ENCODE measurements at regions of chr4 and their contacts with region 1.

Region 1: DNA sequence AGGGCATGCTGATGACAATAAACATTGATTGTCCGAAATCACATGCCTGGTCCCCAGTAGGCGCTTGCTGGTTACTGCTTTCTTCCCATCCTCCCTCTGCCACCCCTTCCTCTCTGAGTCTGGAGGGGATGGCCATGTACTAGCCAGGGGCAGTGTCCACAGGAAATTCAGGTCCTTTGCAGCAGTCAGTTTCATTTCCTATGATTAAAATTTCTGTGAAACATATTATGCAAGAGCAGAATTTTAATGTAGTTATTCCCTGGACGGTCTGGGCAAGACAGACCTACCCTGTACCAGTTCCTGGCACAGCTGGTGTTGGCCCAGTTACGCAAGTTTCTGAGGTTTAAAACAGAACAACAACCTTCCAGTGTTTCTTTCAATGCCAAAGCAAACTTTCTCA is 28.2 kb upstream of the TLR2 start:
- DNase-seq: no peak
- ATAC-seq: no peak
- H3K4me3 ChIP-seq: no peak overlapping the region
- H3K4me3 Mint-ChIP-seq: no peak overlapping the region
- H3K27ac ChIP-seq: no peak overlapping the region
- H3K27ac Mint-ChIP-seq: no peak overlapping the region
- H3K4me1 ChIP-seq: peaks cover 17% of the 10 kb centered on the region
- H3K4me1 Mint-ChIP-seq: peaks cover 17% of the 10 kb centered on the region
- H3K27me3 ChIP-seq: no peaks in the 10 kb centered on the region
- H3K27me3 Mint-ChIP-seq: no peaks in the 10 kb centered on the region
- CTCF ChIP-seq: no peak

Region 2: DNA sequence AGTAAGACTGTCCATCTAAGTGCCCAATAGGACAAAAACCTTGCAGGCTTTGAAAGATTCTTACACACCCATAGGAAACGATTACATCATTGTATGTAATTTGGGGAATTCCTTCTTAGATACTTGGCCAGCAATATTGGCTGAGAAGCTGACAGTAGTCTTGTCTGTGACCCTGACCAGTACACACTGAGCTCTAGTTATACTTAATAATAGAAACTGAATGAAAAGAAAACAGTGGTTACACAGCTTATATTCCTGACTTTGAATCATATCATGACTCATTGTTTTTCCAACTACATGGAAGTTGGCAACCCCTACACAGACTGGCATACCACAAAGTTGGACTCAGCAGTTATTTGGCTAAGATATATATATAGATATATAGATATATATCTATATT is 21.1 kb after region 1 on chr4:
- CTCF ChIA-PET with region 1: no interaction called
- POLR2A ChIA-PET with region 1: no interaction called
- intact Hi-C with region 1: loop called in 1 of 2 experiments (anchors 1 kb)
- DNase-seq: no peak
- ATAC-seq: no peak
- H3K4me3 ChIP-seq: no peak overlapping the region
- H3K4me3 Mint-ChIP-seq: no peak overlapping the region
- H3K27ac ChIP-seq: no peak overlapping the region
- H3K27ac Mint-ChIP-seq: no peak overlapping the region
- H3K4me1 ChIP-seq: no peaks in the 10 kb centered on the region
- H3K4me1 Mint-ChIP-seq: no peaks in the 10 kb centered on the region
- H3K27me3 ChIP-seq: no peaks in the 10 kb centered on the region
- H3K27me3 Mint-ChIP-seq: peaks cover 14% of the 10 kb centered on the region
- CTCF ChIP-seq: no peak

Region 3: GRCh38 chr4:153940916-153941315 is 285.0 kb after region 1 on chr4:
- CTCF ChIA-PET with region 1: no interaction called
- POLR2A ChIA-PET with region 1: no interaction called
- intact Hi-C with region 1: no loop called
- DNase-seq: no peak
- ATAC-seq: no peak
- H3K4me3 ChIP-seq: no peak overlapping the region
- H3K4me3 Mint-ChIP-seq: no peak overlapping the region
- H3K27ac ChIP-seq: no peak overlapping the region
- H3K27ac Mint-ChIP-seq: no peak overlapping the region
- H3K4me1 ChIP-seq: no peaks in the 10 kb centered on the region
- H3K4me1 Mint-ChIP-seq: no peaks in the 10 kb centered on the region
- H3K27me3 ChIP-seq: no peaks in the 10 kb centered on the region
- H3K27me3 Mint-ChIP-seq: peaks cover 7% of the 10 kb centered on the region
- CTCF ChIP-seq: no peak